Cardiac septum (tissue), 1 donor: ENCODE measurements at regions of chr17 and their contacts with region 1.

Region 1: DNA sequence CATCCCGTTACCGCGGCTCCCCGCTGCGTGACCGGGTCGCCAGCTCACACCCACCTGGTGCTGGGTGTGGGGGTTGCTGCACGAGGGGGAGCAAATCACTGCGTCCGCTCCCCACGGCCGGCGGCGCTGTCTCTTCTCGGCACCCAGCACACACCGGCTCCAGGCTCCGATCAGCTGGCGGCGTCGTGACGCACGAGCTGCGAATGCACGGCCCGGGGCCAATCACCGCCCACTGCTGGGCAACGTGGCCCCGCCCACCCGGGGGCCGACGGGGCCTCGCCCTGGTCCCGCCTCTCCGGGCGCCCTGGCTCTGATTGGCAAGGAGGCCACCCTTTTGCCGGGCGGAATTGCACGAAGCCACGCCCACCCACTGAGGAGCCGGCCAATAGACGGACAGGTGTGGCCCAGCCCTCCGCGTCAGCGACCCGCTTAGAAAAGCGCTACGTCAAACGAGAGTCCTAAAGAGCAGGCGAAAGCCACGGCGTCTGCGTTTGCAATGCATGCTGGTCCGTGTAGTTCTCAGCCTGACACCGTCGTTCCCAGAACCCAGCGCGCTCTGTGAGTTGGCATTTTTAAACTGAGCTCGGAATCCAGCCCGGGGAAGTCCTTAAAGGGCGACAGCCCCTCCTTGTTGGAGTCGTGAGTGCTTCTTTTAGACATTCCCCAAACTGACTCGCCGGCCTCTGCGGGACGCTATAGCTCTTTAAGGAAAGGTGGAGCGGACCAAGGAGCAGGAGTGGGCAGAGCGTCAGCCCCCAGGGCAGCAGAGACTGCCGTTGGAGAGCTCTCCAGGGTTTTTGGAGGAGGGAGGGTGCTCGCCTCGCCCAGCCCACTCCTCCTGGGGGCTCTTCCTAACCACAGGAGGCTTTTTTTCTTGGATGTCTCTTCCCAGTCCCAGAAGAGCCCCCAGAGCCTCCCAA is 6.2 kb upstream of the TLCD2 start:
- DNase-seq: peak; percentile 100

Region 2: GRCh38 chr17:1573916-1574696 is 142.2 kb before region 1 on chr17:
- intact Hi-C with region 1: loop called (anchors 5 kb)
- DNase-seq: peak; percentile 93

Region 3: DNA sequence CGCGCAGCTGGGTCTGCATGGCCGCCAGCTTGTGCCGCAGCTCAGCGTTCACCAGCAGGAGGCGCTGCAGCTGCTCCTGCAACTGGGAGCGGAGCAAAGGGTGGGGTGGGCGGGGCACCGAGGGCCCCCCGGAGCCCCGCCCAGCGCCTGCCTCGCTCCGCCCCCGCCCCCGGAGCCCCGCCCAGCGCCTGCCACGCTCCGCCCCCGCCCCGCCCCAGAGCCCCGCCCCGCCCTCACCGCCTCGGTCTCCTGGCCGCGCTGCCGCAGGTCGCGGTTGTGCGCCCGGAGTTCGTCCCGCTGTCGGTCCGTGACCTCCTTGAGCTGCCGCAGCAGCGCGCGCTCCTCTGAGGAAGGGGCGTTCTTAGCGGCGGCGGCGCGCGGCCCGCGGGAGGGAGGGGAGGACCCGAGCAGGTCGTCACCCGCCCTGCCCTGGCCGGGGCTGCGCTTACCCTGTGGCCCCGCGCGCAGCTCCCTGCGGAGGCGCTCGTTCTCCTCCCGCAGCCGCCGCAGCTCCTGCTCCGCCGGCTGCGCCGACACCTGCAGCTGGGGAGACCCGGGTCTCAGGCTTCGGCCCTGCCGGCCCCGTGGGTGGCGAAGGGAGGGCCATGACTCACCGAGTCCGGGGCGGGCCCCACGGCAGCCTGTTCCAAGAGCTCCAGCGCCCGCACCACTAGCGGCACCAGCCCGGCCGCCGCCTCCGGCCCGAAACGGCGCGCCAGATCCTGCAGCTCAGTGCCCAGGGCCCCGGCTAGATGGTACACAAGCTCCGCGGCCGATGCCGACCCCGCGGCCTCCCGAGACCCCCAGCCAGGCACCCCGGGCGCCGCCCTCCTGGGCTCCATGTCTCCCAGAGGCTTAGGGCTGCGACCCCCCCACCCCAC is 67.1 kb before region 1 on chr17:
- intact Hi-C with region 1: loop called (anchors 2 kb)
- DNase-seq: peak; percentile 98

Region 4: GRCh38 chr17:1673041-1673785 is 43.1 kb before region 1 on chr17:
- intact Hi-C with region 1: loop called (anchors 2 kb)
- DNase-seq: no peak

Region 5: DNA sequence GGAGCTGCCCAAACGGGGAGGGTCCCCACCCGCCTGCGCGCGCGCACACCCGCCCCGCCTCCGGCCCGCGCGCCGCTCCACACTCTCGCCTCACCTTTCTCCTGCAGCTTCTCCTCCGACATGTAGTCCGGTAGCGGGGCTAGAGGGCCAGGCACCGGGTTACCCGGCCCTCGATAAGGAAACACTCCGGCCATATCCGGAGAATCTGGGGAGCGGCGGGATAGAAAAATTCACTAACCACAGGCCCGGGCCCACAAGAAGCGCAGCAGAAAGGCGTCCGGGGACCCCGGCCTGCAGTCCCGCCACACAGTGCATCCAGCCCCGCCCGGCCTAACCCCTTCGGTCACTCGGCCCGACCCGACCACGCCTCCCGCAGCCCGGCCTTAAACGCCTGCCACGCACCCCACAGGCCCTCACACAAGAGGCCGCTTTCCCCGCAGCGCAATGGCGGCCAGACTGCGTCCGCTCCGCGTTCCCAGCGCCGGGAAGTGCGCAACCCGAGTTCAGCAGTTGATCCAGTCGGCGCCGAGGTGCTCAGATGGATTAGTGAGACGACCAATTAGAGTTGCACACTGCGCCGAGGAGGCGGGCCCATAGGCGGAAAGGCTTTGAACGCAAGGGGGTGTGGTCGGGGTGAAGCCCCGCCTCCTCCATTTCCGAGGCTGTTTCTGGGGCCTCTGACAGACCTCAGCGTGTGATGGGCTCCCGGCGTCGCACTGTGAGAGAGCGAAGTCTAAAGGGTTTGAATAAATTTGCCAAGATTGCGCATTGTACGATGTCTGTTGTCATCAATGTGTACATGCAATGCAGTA is 31.8 kb before region 1 on chr17 and contains the start of gene PRPF8:
- intact Hi-C with region 1: loop called (anchors 1 kb)
- DNase-seq: peak; percentile 98
- total RNA-seq, gene PRPF8: 162 TPM

Region 6: GRCh38 chr17:1736348-1737281 is 20.3 kb after region 1 on chr17:
- intact Hi-C with region 1: no loop called
- DNase-seq: no peak

Region 7: GRCh38 chr17:1783834-1784611 is 67.7 kb after region 1 on chr17:
- intact Hi-C with region 1: loop called (anchors 2 kb)
- DNase-seq: peak; percentile 83

Region 8: DNA sequence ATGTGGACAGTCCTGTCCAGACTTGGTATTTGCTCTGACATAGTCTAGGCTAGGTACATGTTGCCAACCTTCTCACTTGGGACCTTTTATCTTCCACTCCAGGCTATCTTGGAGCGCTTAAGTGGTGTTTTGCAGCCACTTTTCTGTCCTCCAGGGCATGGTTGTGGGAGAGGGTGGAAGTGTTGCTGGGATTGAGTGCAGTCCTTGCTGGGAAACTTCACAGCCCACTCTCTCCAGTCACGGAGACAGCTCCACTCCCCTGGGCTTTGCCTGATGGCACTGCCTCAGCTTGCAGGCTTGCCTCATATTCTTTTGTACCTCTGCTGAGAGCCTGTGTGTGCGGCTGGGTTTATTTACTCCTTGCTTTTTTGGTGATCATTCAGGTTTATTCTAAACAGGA is 130.9 kb after region 1 on chr17:
- intact Hi-C with region 1: no loop called
- DNase-seq: no peak

Region 9: DNA sequence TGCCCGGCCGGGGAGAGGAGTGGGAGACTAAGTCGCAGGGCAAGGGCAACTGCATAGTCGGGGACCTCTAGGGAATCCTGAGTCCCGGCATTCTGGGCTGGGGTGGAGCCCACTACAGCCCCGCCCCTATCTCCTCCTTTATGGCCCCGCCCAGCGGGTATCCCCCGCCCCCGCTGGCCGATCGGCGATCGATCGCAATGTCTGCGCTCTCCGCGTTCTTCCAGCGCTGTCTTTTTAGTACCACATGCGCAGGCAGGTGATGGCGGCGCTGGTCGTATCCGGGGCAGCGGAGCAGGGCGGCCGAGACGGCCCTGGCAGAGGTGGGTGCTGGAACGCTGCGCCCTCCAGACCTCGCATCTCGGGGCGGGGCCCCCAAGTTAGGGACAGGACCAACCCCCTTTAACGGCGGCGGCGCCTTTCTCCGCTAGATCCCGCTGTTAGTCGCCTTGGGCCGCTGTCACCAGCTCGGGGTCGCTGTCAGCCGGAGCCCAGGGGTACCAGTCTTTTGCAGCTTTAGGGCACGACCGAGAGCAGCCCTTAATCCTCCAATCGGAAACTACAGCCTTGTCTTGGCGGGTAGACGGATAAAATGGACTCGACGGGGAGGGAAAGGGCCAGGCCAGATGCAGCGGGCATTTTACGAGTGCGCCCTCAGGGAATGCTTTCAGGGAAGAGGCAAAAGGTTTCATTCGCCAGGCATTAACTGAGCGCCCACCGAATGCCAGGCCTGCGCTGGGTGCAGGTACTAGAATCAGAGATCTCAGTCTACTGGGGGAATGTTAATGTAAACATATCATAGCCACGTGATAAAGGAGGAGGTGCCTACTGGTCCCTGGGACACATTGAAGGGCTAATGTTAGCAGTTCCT is 313.8 kb after region 1 on chr17 and contains the start of gene DPH1:
- intact Hi-C with region 1: loop called (anchors 10 kb)
- DNase-seq: peak; percentile 92
- total RNA-seq, gene DPH1: 28.8 TPM